Activated CD4-positive, alpha-beta memory T cell treated with anti-CD3 and anti-CD28 coated beads for 36 hours (primary cell): ENCODE measurements at regions of chr11 and their contacts with region 1.

Region 1: GRCh38 chr11:111454561-111455192 is 57.5 kb downstream of the BTG4 start:
- DNase-seq: peak; percentile 78
- H3K4me3 Mint-ChIP-seq: no peak overlapping the region
- H3K27ac Mint-ChIP-seq: no peak overlapping the region
- H3K4me1 Mint-ChIP-seq: no peaks in the 10 kb centered on the region
- H3K27me3 Mint-ChIP-seq: peaks cover 11% of the 10 kb centered on the region

Region 2: GRCh38 chr11:111296196-111296595 is 158.5 kb before region 1 on chr11:
- CTCF ChIA-PET with region 1: no interaction called
- POLR2A ChIA-PET with region 1: no interaction called
- intact Hi-C with region 1: no loop called
- DNase-seq: no peak
- H3K4me3 Mint-ChIP-seq: no peak overlapping the region
- H3K27ac Mint-ChIP-seq: no peak overlapping the region
- H3K4me1 Mint-ChIP-seq: peaks cover 2% of the 10 kb centered on the region
- H3K27me3 Mint-ChIP-seq: peaks cover 24% of the 10 kb centered on the region

Region 3: DNA sequence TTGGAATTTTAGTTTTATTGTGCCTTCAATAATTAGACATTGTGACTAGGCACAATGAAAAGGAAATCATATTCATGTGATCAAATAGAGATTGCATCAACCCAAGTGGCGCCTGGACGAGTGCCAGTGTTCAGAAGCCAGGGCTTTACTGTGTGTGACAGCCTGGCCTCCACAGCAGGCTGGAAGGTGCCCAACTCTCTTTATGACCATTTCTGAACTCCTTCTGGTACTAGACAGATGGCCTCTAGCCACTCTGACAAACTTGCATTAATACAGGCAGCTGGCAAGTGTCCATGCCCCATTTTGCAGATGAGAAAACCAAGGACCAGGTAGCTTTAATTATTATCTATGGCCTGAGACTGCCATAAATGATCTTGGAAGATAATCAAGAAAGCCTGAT is 67.3 kb before region 1 on chr11:
- CTCF ChIA-PET with region 1: no interaction called
- POLR2A ChIA-PET with region 1: no interaction called
- intact Hi-C with region 1: no loop called
- DNase-seq: no peak
- H3K4me3 Mint-ChIP-seq: no peak overlapping the region
- H3K27ac Mint-ChIP-seq: no peak overlapping the region
- H3K4me1 Mint-ChIP-seq: peaks cover 6% of the 10 kb centered on the region
- H3K27me3 Mint-ChIP-seq: peaks cover 5% of the 10 kb centered on the region

Region 4: DNA sequence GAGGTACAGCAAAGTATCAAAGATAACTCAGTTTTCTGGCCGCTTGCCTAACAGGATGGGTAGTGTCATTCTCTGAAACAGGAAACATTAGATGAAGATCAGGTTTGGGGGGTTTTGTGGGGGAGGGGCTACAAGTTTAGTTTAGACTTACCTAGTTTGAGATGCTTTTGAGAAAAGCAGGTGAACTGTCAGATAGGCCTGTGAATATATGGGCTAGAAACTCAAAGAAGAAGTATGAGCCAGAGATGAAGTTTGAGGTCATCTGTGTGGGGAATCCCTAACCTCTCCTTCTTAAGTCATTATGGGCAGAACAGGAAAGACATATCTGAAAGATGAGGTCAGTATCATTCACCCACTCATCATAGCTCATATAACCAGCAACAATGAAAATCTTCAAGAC is 71.8 kb after region 1 on chr11:
- CTCF ChIA-PET with region 1: no interaction called
- POLR2A ChIA-PET with region 1: no interaction called
- intact Hi-C with region 1: loop called (anchors 5 kb)
- DNase-seq: peak; percentile 43
- H3K4me3 Mint-ChIP-seq: no peak overlapping the region
- H3K27ac Mint-ChIP-seq: no peak overlapping the region
- H3K4me1 Mint-ChIP-seq: peaks cover 28% of the 10 kb centered on the region
- H3K27me3 Mint-ChIP-seq: peaks cover 15% of the 10 kb centered on the region

Region 5: DNA sequence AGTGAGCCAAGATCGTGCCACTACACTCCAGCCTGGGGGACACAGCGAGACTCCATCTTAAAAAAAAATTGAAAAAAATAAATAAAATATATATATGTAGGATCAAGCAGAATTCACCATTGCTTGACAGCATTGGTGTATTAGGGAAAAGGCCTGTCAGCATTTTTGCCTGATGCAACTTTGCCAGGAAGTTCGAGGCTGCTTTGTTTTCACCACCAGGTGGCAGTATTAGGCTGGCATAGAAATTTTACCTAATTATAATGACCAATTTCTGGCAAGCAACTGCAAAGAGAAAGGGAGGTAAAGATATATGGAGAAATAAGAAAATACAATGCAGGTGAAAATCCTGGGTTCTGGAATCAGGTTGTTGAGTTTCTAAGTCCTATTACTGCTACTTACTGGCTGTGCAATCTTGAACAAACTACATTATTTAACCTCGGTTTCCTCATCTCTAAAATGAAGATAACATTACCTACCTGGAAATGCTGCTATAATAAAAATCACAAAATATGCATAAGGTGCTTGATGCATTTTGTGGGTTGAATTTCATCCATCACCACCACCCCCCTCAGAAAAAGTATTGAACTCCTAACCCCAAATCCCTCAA is 110.5 kb after region 1 on chr11:
- CTCF ChIA-PET with region 1: interaction called, 6 read pairs
- POLR2A ChIA-PET with region 1: no interaction called
- intact Hi-C with region 1: loop called (anchors 2 kb)
- DNase-seq: peak; percentile 70
- H3K4me3 Mint-ChIP-seq: no peak overlapping the region
- H3K27ac Mint-ChIP-seq: no peak overlapping the region
- H3K4me1 Mint-ChIP-seq: no peaks in the 10 kb centered on the region
- H3K27me3 Mint-ChIP-seq: no peaks in the 10 kb centered on the region

Region 6: GRCh38 chr11:111586388-111586831 is 131.7 kb after region 1 on chr11:
- CTCF ChIA-PET with region 1: no interaction called
- POLR2A ChIA-PET with region 1: no interaction called
- intact Hi-C with region 1: loop called (anchors 5 kb)
- DNase-seq: peak; percentile 35
- H3K4me3 Mint-ChIP-seq: no peak overlapping the region
- H3K27ac Mint-ChIP-seq: no peak overlapping the region
- H3K4me1 Mint-ChIP-seq: no peaks in the 10 kb centered on the region
- H3K27me3 Mint-ChIP-seq: no peaks in the 10 kb centered on the region

Region 7: DNA sequence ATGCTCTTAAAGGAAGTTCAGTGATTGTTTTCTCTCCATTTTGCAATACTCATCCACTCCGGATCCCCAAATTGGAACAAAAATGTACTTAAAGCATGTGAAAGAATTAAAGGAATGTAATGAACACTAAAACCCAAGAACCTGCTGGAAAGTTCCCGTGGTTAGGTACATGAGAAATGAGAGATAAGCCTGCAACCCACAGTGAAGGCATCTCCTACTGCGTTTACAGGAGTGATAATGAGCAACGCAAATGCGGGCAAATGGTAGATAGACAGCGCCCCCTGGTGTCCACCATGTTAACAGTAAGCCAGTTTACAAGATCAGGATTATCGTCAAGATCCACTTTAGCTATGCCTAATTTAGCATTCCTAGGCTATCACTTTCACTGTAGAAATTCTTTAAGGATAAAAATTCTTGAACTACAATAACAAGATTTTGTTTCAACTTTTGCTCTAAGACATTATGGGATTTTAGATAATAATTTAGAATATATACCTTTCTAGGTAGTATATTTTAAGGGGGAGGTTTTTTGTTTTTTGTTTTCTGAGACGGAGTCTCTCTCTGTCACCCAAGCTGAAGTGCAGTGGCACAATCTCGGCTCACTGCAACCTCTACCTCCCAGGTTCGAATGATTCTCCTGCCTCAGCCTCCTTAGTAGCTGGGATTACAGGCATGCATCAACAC is 386.8 kb after region 1 on chr11:
- CTCF ChIA-PET with region 1: no interaction called
- POLR2A ChIA-PET with region 1: no interaction called
- intact Hi-C with region 1: loop called (anchors 10 kb)
- DNase-seq: peak; percentile 91
- H3K4me3 Mint-ChIP-seq: no peak overlapping the region
- H3K27ac Mint-ChIP-seq: no peak overlapping the region
- H3K4me1 Mint-ChIP-seq: peaks cover 11% of the 10 kb centered on the region
- H3K27me3 Mint-ChIP-seq: no peaks in the 10 kb centered on the region